IMR-90 (cell line): ENCODE measurements at regions of chr1 and their contacts with region 1.

Region 1: GRCh38 chr1:36650200-36651065 is 167.7 kb upstream of the CSF3R start:
- DNase-seq: peak; percentile 37
- ATAC-seq: peak; percentile 93
- H3K4me3 ChIP-seq: no peak overlapping the region
- H3K27ac ChIP-seq: no peak overlapping the region
- H3K4me1 ChIP-seq: no peaks in the 10 kb centered on the region
- H3K27me3 ChIP-seq: peaks cover 12% of the 10 kb centered on the region
- CTCF ChIP-seq: peak; percentile 77
- POLR2A ChIP-seq: no peak
- RAD21 ChIP-seq: peak; percentile 56

Region 2: GRCh38 chr1:36576118-36576517 is 74.3 kb before region 1 on chr1:
- CTCF ChIA-PET with region 1: no interaction called
- POLR2A ChIA-PET with region 1: no interaction called
- dilution Hi-C with region 1: no loop called
- in situ Hi-C with region 1: no loop called
- intact Hi-C with region 1: loop called (anchors 10 kb)
- DNase-seq: peak; percentile 19
- ATAC-seq: peak; percentile 97
- H3K4me3 ChIP-seq: no peak overlapping the region
- H3K27ac ChIP-seq: no peak overlapping the region
- H3K4me1 ChIP-seq: no peaks in the 10 kb centered on the region
- H3K27me3 ChIP-seq: peaks cover 6% of the 10 kb centered on the region
- CTCF ChIP-seq: peak; percentile 78
- POLR2A ChIP-seq: no peak
- RAD21 ChIP-seq: peak; percentile 82